ENCODE measurements at regions of chr15 and their contacts with region 1.

Region 1: GRCh38 chr15:75544359-75544758 is 34.8 kb downstream of the PTPN9 start:
- DNase-seq: no peak
- ATAC-seq: peak; percentile 76 to 77; a peak in 5 of 6 replicates
- H3K4me3 ChIP-seq: no peak overlapping the region
- H3K27ac ChIP-seq: peak overlapping the region; percentile 14 to 38; a peak in 2 of 6 replicates
- H3K4me1 ChIP-seq: peaks cover 37% of the 10 kb centered on the region
- CTCF ChIP-seq: no peak
- EP300 ChIP-seq: no peak
- POLR2A ChIP-seq: no peak
- RAD21 ChIP-seq: no peak

Region 2: DNA sequence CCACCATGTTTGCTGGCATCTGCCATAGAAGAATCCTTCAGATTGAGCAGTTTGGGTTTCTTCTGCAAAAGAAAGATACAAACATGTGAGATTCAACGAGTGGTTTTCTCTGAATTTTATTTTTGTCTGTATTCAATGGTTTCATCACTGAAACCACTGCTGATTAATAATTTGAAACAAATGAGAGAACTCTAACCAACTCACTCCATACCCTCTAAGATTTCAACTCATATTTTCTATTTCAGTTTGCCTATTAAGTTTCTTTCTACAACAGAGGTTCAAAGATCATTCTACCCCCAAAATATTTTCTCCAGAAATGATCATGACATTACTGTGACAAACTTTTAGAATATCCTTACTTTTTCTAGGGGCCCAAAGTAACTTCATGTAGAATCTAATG is 137.3 kb before region 1 on chr15:
- CTCF ChIA-PET with region 1: no interaction called
- POLR2A ChIA-PET with region 1: no interaction called
- DNase-seq: no peak
- ATAC-seq: no peak
- H3K4me3 ChIP-seq: no peak overlapping the region
- H3K27ac ChIP-seq: no peak overlapping the region
- H3K4me1 ChIP-seq: no peaks in the 10 kb centered on the region
- CTCF ChIP-seq: no peak
- EP300 ChIP-seq: no peak
- POLR2A ChIP-seq: no peak
- RAD21 ChIP-seq: no peak

Region 3: DNA sequence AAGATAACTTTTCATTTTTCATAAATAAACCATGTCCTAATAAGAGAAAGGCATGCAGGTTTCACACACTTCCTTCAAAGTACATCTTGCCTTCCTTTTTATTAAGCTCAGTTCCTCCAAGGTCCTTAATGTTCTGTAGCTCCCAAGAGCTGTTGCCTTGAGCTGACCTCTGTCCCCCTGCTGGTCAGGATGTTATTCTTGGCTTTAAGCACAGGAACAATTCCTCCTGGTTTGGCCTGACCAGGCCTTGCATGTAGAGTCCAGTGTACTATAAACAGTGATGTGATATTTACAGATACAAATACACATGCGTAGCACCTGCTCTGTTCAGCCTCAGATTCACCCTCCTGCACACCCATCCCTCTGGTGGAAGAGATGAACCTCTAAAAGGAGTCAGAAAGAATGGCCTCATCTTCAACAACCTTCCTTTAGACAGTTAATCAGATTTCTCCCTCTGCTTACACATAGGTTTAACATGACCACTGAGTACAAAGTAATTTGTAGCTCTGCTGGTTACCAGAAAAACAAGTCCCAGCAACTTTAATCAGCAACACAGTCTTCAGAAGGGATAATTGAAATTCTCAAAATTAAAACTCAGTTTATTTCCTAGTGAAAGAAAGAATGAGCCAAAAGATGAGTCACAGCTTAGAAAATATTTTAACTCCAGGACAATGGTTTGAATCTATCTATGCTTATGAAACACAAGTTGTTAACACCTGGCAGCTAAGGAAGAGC is 11.8 kb before region 1 on chr15:
- CTCF ChIA-PET with region 1: interaction called, 21 read pairs
- POLR2A ChIA-PET with region 1: no interaction called
- DNase-seq: peak; percentile 64 to 84
- ATAC-seq: peak; percentile 96
- H3K4me3 ChIP-seq: no peak overlapping the region
- H3K27ac ChIP-seq: peak overlapping the region; percentile 53 to 56; a peak in 5 of 6 replicates
- H3K4me1 ChIP-seq: peaks cover 39% of the 10 kb centered on the region
- CTCF ChIP-seq: peak; percentile 62
- EP300 ChIP-seq: no peak
- POLR2A ChIP-seq: no peak
- RAD21 ChIP-seq: peak in 1 of 2 experiments; percentile 38; a peak in 3 of 5 replicates

Region 4: GRCh38 chr15:75565062-75565970 is 21.0 kb after region 1 on chr15:
- CTCF ChIA-PET with region 1: interaction called, 11 read pairs
- POLR2A ChIA-PET with region 1: no interaction called
- DNase-seq: no peak
- ATAC-seq: peak; percentile 49 to 66; a peak in 5 of 6 replicates
- H3K4me3 ChIP-seq: no peak overlapping the region
- H3K27ac ChIP-seq: peak overlapping the region in 1 of 2 experiments; percentile 1; a peak in 1 of 6 replicates
- H3K4me1 ChIP-seq: peaks cover 11% of the 10 kb centered on the region
- CTCF ChIP-seq: no peak
- EP300 ChIP-seq: no peak
- POLR2A ChIP-seq: no peak
- RAD21 ChIP-seq: no peak

Measured in A549 (cell line).